Adrenal gland (tissue), 19 donors: ENCODE measurements at regions of chr2 and their contacts with region 1.

Region 1: GRCh38 chr2:28751252-28751955 is at the start of gene PPP1CB:
- DNase-seq: peak; percentile 96 to 97 (median 97)
- H3K4me3 ChIP-seq: peak within 1 kb of the TSS; percentile 64 to 96 (median 81)
- H3K27ac ChIP-seq: peak within 1 kb of the TSS; percentile 94 to 100 (median 98)
- H3K4me1 ChIP-seq: peaks cover 18 to 40% of the 10 kb centered on the region in 2 donors
- H3K27me3 ChIP-seq: no peaks in the 10 kb centered on the region
- CTCF ChIP-seq: peak in 2 of 6 experiments; percentile 17 to 35
- POLR2A ChIP-seq: peak; percentile 81 to 95
- total RNA-seq, gene PPP1CB: 89.4 to 272 (median 223) TPM

Region 2: DNA sequence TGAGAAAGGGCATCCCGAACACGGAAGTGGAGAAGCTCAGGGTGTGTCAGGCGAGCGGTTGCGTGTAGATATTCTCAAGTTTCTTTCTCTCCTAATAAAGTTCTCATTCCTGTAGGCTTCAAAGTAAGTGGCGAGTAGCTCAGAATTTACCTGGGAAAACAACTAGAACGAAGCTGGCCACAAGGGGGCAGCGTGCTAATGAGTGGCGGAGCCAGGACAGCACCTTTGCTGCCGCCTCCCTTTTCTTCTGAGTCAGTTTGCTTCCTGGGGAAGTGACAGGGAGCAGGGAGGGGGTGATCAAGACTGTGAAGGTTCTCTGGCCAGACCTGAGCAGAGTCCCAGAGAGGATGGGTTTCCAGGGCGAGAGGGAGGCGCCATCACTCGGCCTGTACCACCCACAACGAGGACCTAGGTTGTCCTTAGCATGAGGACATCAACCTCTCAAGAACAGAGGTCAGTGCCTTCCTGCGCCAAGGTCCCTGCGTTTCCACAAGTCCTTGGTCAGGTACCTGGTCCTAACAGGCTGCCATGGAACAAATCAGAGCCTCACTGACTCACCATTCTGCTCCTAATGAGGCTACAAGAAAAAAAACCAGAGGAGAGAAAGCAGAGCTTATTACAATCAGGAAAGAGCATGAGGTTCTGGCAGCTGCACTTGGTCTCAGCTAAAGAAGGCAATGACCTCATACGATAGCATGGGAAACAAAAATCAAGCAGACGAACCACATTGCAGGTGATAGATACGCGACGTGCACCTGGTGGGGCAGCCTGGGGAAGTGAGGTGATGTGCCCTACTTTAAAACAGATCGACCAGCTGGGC is 156.9 kb before region 1 on chr2:
- intact Hi-C with region 1: loop called in 1 of 2 experiments (anchors 5 kb)
- DNase-seq: peak; percentile 83 to 97 (median 92)
- H3K4me3 ChIP-seq: no peak overlapping the region
- H3K27ac ChIP-seq: peak overlapping the region in 4 of 5 donors; percentile 54 to 88 (median 78)
- H3K4me1 ChIP-seq: peaks cover 7 to 17% of the 10 kb centered on the region in 2 donors
- H3K27me3 ChIP-seq: no peaks in the 10 kb centered on the region
- CTCF ChIP-seq: peak; percentile 79 to 91 (median 80)
- POLR2A ChIP-seq: peak in 1 of 2 donors; percentile 10

Region 3: DNA sequence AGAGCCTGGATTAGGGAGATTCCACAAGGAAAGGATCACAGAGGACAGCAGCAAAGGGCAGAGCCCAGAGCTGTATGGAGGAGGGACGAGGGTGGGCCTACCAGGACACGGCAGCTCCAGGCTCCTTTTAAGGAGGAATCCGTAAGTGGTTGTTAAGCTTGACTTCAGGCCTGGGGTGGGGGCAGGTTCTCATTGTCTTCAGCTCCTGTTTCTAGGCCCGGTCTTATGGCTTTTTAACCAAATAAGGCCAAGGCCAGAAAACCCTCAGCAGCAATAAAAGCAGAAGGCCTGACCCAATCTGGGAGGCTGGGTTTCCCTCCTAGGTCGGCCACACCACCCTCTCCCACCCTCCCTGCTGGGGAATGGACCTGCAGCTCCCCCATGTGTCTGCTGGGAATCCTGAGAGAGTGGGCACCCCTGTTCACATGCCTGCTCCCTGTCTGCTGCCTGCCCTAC is 144.4 kb before region 1 on chr2:
- intact Hi-C with region 1: loop called in 1 of 2 experiments (anchors 10 kb)
- DNase-seq: peak in 2 of 7 donors; percentile 36 to 38
- H3K4me3 ChIP-seq: no peak overlapping the region
- H3K27ac ChIP-seq: peak overlapping the region in 1 of 5 donors; percentile 49
- H3K4me1 ChIP-seq: peaks cover 0 to 5% of the 10 kb centered on the region in 2 donors
- H3K27me3 ChIP-seq: no peaks in the 10 kb centered on the region
- CTCF ChIP-seq: peak in 3 of 6 experiments; percentile 18 to 24 (median 23)
- POLR2A ChIP-seq: no peak

Region 4: DNA sequence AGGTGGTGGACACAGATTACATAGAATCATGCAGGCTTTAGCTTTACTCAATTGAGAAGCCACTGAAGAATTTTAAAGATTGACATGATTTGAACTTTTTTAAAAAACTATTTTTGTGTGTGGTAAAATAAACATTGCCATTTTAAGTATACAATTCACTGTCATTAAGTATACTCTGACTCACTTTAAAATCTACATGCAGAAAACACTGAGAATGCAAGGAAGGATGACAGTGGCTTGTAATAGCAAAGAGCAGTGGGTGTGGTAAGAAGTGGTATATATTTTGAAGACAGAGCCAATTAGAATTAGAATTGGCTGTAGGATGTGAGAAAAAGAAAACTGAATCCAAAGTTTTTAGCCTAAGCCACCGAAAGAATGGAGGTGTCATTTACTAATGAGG is 103.8 kb after region 1 on chr2:
- intact Hi-C with region 1: no loop called
- DNase-seq: no peak
- H3K4me3 ChIP-seq: no peak overlapping the region
- H3K27ac ChIP-seq: no peak overlapping the region
- H3K4me1 ChIP-seq: no peaks in the 10 kb centered on the region
- H3K27me3 ChIP-seq: no peaks in the 10 kb centered on the region
- CTCF ChIP-seq: no peak
- POLR2A ChIP-seq: no peak

Region 5: DNA sequence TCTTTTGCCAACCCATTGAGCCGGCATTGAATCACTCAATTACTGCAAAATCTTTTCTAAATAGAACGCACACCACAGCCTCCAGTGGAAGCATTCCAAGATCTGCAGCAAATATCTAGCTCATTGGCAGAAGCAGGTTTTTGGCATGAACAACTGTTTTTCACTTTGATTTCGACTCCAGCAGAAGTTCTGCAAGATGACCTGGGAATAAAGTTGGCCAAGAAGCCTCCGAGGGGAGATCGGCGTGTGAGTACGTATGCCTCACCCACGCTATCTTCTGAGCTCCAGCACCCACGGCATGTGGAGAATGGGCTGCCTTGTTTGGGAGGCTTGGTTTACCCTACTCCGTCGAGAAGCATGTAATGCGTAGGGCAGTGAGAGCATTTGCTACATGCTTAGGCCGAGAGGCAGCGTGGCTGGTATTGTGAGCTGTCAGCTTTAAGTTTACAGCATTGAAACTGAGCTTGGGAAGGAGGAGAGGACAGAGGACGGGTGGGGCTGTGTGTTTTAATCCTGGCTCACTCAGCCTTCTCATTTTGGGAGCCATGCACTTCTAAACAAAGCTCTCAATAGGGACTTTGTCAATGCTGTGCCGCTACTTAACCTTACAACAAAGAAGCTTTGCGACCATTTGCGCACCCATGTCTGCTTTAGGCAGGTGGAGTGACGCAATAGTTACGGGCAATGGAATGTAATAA is 312.4 kb after region 1 on chr2:
- intact Hi-C with region 1: no loop called
- DNase-seq: peak in 2 of 7 donors; percentile 22 to 52
- H3K4me3 ChIP-seq: no peak overlapping the region
- H3K27ac ChIP-seq: peak overlapping the region in 1 of 5 donors; percentile 27
- H3K4me1 ChIP-seq: no peaks in the 10 kb centered on the region
- H3K27me3 ChIP-seq: no peaks in the 10 kb centered on the region
- CTCF ChIP-seq: no peak
- POLR2A ChIP-seq: no peak